ENCODE measurements at regions of chrX and their contacts with region 1.

Region 1: DNA sequence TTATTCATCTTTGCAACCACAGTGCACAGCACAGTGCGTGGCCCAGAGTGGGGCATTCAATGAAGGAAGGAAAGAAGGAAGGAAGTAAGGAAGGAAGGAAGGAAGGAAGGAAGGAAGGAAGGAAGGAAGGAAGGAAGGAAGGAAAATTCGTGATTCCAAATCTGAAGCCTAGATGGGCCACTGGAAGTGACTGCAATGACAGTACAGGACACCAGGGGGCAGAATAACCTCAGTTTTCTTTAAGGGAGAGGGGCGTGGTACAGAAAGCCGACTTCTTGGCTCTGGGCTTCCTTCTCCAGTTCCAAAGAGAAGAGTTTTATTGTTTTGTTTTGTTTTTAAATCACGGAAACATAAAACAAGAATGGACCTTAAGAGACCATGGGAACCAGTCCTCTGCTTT is 47.8 kb downstream of the APLN start:
- DNase-seq: peak; percentile 13
- ATAC-seq: peak; percentile 67
- H3K4me3 ChIP-seq: no peak overlapping the region
- H3K27ac ChIP-seq: no peak overlapping the region
- H3K4me1 ChIP-seq: peaks cover 5% of the 10 kb centered on the region
- H3K27me3 ChIP-seq: no peaks in the 10 kb centered on the region; a peak in 2 of 4 replicates
- CTCF ChIP-seq: peak; percentile 74 to 80 (median 76)
- EP300 ChIP-seq: no peak
- POLR2A ChIP-seq: no peak
- RAD21 ChIP-seq: peak; percentile 82

Region 2: GRCh38 chrX:129637217-129638109 is 30.5 kb after region 1 on chrX:
- CTCF ChIA-PET with region 1: interaction called, 21 read pairs
- POLR2A ChIA-PET with region 1: interaction called, 5 read pairs
- RAD21 ChIA-PET with region 1: interaction called, 4 read pairs
- SMC1A ChIA-PET with region 1: interaction called, 5 read pairs
- in situ Hi-C with region 1: no loop called
- intact Hi-C with region 1: no loop called
- DNase-seq: peak; percentile 33
- ATAC-seq: peak; percentile 92
- H3K4me3 ChIP-seq: no peak overlapping the region
- H3K27ac ChIP-seq: no peak overlapping the region
- H3K4me1 ChIP-seq: no peaks in the 10 kb centered on the region
- H3K27me3 ChIP-seq: no peaks in the 10 kb centered on the region; a peak in 2 of 4 replicates
- CTCF ChIP-seq: peak; percentile 93 to 98 (median 97)
- EP300 ChIP-seq: no peak
- POLR2A ChIP-seq: no peak
- RAD21 ChIP-seq: peak; percentile 79

Region 3: GRCh38 chrX:129905787-129906580 is 299.1 kb after region 1 on chrX and contains the start of gene UTP14A:
- CTCF ChIA-PET with region 1: interaction called, 3 read pairs
- POLR2A ChIA-PET with region 1: interaction called, 3 read pairs
- RAD21 ChIA-PET with region 1: no interaction called
- SMC1A ChIA-PET with region 1: interaction called, 5 read pairs
- in situ Hi-C with region 1: no loop called
- intact Hi-C with region 1: loop called (anchors 5 kb)
- DNase-seq: peak; percentile 68
- ATAC-seq: peak; percentile 98
- H3K4me3 ChIP-seq: peak within 1 kb of the TSS; percentile 84
- H3K27ac ChIP-seq: peak within 1 kb of the TSS; percentile 35; the same call in 1 of the 2 replicates
- H3K4me1 ChIP-seq: no peaks in the 10 kb centered on the region; the same call in 1 of the 2 replicates
- H3K27me3 ChIP-seq: no peaks in the 10 kb centered on the region
- CTCF ChIP-seq: no peak
- EP300 ChIP-seq: no peak
- POLR2A ChIP-seq: peak; percentile 76
- RAD21 ChIP-seq: no peak
- polyA plus RNA-seq, gene UTP14A: 16.9 to 25.4 TPM

Region 4: GRCh38 chrX:130024127-130024526 is 417.2 kb after region 1 on chrX:
- CTCF ChIA-PET with region 1: interaction called, 3 read pairs
- POLR2A ChIA-PET with region 1: no interaction called
- RAD21 ChIA-PET with region 1: no interaction called
- SMC1A ChIA-PET with region 1: interaction called, 3 read pairs
- in situ Hi-C with region 1: no loop called
- intact Hi-C with region 1: loop called (anchors 1 kb)
- DNase-seq: peak; percentile 65
- ATAC-seq: peak; percentile 100
- H3K4me3 ChIP-seq: peak overlapping the region; percentile 43; the same call in 1 of the 2 replicates
- H3K27ac ChIP-seq: peak overlapping the region; percentile 20; the same call in 1 of the 2 replicates
- H3K4me1 ChIP-seq: no peaks in the 10 kb centered on the region
- H3K27me3 ChIP-seq: no peaks in the 10 kb centered on the region
- CTCF ChIP-seq: no peak
- EP300 ChIP-seq: no peak
- POLR2A ChIP-seq: no peak
- RAD21 ChIP-seq: no peak

Region 5: DNA sequence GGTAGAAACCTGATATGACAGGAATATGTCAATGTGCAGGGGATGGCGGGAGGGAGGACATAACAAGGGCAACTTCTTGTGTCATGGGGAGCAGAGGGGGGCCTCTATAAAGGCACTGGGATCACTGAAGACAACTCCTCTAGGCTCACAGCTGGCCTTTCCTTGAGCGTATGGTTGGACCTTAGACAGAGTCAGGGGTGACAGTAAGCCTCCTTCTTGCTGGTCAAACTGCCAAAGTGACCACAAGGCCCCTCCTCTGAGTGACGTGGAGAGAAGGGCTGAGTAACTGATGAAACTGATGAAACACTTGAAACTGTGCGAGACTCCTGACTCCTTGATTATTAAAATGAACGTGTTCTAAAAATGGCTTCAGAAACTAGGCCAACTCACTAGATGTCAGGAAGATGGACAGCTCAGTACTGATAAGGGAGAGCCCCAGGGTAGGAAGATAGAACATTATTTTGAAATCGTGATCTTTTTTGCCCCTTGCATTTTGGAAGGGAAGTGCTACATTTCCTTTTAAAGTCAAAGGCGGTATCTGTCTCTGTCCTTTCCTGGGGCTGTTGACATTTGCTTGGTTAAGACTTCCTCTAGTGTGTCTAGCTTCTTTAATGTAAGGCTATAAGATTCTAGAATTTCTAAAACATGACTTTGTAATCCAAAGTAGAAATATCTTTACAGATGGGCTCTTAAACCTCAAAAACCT is 566.4 kb after region 1 on chrX:
- CTCF ChIA-PET with region 1: no interaction called
- POLR2A ChIA-PET with region 1: no interaction called
- RAD21 ChIA-PET with region 1: no interaction called
- SMC1A ChIA-PET with region 1: no interaction called
- in situ Hi-C with region 1: loop called (anchors 25 kb)
- intact Hi-C with region 1: no loop called
- DNase-seq: peak; percentile 56
- ATAC-seq: peak; percentile 54
- H3K4me3 ChIP-seq: peak overlapping the region; percentile 80
- H3K27ac ChIP-seq: peak overlapping the region; percentile 84
- H3K4me1 ChIP-seq: peaks cover 17% of the 10 kb centered on the region
- H3K27me3 ChIP-seq: no peaks in the 10 kb centered on the region
- CTCF ChIP-seq: no peak
- EP300 ChIP-seq: no peak
- POLR2A ChIP-seq: peak; percentile 71
- RAD21 ChIP-seq: no peak

Region 6: GRCh38 chrX:130916636-130917422 is 1309.9 kb after region 1 on chrX:
- CTCF ChIA-PET with region 1: interaction called, 3 read pairs
- POLR2A ChIA-PET with region 1: no interaction called
- RAD21 ChIA-PET with region 1: no interaction called
- SMC1A ChIA-PET with region 1: no interaction called
- in situ Hi-C with region 1: loop called (anchors 10 kb)
- intact Hi-C with region 1: loop called (anchors 10 kb)
- DNase-seq: no peak
- ATAC-seq: peak; percentile 89
- H3K4me3 ChIP-seq: no peak overlapping the region
- H3K27ac ChIP-seq: no peak overlapping the region
- H3K4me1 ChIP-seq: no peaks in the 10 kb centered on the region
- H3K27me3 ChIP-seq: no peaks in the 10 kb centered on the region
- CTCF ChIP-seq: peak; percentile 68 to 79 (median 78)
- EP300 ChIP-seq: no peak
- POLR2A ChIP-seq: no peak
- RAD21 ChIP-seq: peak; percentile 99